Pancreas (tissue), 10 donors: ENCODE measurements at regions of chr19 and their contacts with region 1.

Region 1: DNA sequence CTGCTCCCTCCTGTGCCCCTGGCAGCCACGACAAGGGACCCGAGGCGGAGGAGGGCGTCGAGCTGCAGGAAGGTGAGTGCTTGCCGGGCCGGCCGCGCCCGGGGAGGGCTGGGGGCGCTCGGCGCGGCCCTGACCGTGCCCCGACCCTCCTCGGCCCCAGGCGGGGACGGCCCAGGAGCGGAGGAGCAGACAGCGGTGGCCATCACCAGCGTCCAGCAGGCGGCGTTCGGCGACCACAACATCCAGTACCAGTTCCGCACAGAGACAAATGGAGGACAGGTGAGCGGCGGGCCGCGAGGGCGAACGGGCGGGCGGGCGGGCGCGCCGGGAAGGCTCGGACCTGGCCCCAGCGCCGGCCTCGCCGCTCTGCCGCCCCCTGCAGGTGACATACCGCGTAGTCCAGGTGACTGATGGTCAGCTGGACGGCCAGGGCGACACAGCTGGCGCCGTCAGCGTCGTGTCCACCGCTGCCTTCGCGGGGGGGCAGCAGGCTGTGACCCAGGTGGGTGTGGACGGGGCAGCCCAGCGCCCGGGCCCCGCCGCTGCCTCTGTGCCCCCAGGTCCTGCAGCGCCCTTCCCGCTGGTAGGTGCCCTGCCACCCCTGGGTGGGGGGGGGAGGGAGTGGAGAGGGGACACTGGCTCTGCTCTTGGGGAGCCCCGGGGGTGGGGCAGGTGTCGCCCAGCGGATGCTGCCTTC is 807 bp downstream of the USF2 start:
- DNase-seq: peak; percentile 88 to 99 (median 94)
- ATAC-seq: peak; percentile 57 to 68 (median 66)
- H3K4me3 ChIP-seq: peak overlapping the region; percentile 44 to 73 (median 65)
- H3K27ac ChIP-seq: peak overlapping the region; percentile 80 to 95 (median 90)
- H3K4me1 ChIP-seq: peaks cover 13 to 16% (median 15%) of the 10 kb centered on the region in 3 donors
- H3K27me3 ChIP-seq: no peaks in the 10 kb centered on the region
- CTCF ChIP-seq: peak; percentile 83 to 94 (median 90)

Region 2: GRCh38 chr19:35154525-35155406 is 114.8 kb before region 1 on chr19 and contains the start of gene FXYD5:
- intact Hi-C with region 1: loop called in 1 of 3 experiments (anchors 5 kb)
- DNase-seq: peak in 5 of 6 donors; percentile 34 to 82 (median 60)
- ATAC-seq: peak; percentile 73 to 90 (median 86)
- H3K4me3 ChIP-seq: peak within 1 kb of the TSS; percentile 5 to 58 (median 40)
- H3K27ac ChIP-seq: peak within 1 kb of the TSS in 1 of 4 donors; percentile 23
- H3K4me1 ChIP-seq: no peaks in the 10 kb centered on the region
- H3K27me3 ChIP-seq: peaks cover 0 to 11% (median 0%) of the 10 kb centered on the region in 4 donors
- CTCF ChIP-seq: no peak
- total RNA-seq, gene FXYD5: 2.6 to 34.1 (median 9.2) TPM

Region 3: GRCh38 chr19:35395382-35396199 is 126.0 kb after region 1 on chr19:
- intact Hi-C with region 1: no loop called
- DNase-seq: peak; percentile 78 to 93 (median 82)
- ATAC-seq: peak; percentile 97 to 99 (median 98)
- H3K4me3 ChIP-seq: no peak overlapping the region
- H3K27ac ChIP-seq: peak overlapping the region; percentile 20 to 54 (median 31)
- H3K4me1 ChIP-seq: peaks cover 0 to 8% (median 0%) of the 10 kb centered on the region in 3 donors
- H3K27me3 ChIP-seq: no peaks in the 10 kb centered on the region
- CTCF ChIP-seq: no peak